Naive thymus-derived CD4-positive, alpha-beta T cell (primary cell): ENCODE measurements at regions of chr15 and their contacts with region 1.

Region 1: DNA sequence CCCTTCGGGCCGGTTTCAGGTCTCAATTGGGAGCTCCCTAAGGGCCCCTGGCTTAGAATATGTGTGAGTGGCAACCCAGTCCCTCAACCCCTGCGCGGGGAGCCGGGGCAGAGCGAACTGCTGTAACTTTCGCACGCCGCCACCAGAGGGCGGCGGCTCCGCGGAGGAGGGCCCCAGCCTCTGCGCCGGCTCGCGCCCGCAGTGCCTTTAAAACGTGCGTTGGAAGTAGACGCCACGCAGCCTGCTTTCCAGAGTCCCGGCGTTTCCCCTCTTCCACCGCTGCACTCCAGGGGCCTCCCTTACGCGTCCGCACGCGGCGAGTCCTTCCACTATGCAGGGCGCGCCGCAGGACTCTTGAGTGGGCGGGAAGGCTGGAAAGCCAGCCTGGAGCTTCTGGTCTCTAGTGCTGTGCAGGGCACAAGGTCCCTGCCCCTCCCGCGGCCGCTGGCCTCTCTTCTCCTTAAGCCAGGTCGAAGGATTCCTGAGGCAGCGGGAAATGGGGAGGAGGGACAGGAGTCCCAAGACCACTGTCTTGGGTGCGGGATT is 23.7 kb upstream of the RNU6-1 start:
- DNase-seq: peak; percentile 49 to 77 (median 65)
- ATAC-seq: peak; percentile 99
- H3K4me3 ChIP-seq: peak overlapping the region; percentile 25
- H3K4me3 Mint-ChIP-seq: peak overlapping the region in 8 of 10 donors; percentile 28 to 81 (median 52)
- H3K27ac ChIP-seq: no peak overlapping the region
- H3K27ac Mint-ChIP-seq: no peak overlapping the region
- H3K4me1 ChIP-seq: peaks cover 0 to 5% of the 10 kb centered on the region in 2 donors
- H3K4me1 Mint-ChIP-seq: peaks cover 0 to 4% (median 3%) of the 10 kb centered on the region in 7 donors
- H3K27me3 ChIP-seq: no peaks in the 10 kb centered on the region
- H3K27me3 Mint-ChIP-seq: peaks cover 8 to 48% (median 9%) of the 10 kb centered on the region in 5 donors

Region 2: GRCh38 chr15:68154923-68155559 is 291.5 kb after region 1 on chr15:
- CTCF ChIA-PET with region 1: interaction called, 11 read pairs
- POLR2A ChIA-PET with region 1: no interaction called
- intact Hi-C with region 1: loop called in 1 of 2 experiments (anchors 1 kb)
- DNase-seq: peak in 6 of 9 donors; percentile 4 to 47 (median 30)
- ATAC-seq: peak; percentile 36
- H3K4me3 ChIP-seq: no peak overlapping the region
- H3K4me3 Mint-ChIP-seq: no peak overlapping the region
- H3K27ac ChIP-seq: no peak overlapping the region
- H3K27ac Mint-ChIP-seq: peak overlapping the region in 2 of 9 donors; percentile 1 to 62
- H3K4me1 ChIP-seq: no peaks in the 10 kb centered on the region
- H3K4me1 Mint-ChIP-seq: peaks cover 0 to 14% (median 6%) of the 10 kb centered on the region in 7 donors
- H3K27me3 ChIP-seq: no peaks in the 10 kb centered on the region
- H3K27me3 Mint-ChIP-seq: no peaks in the 10 kb centered on the region

Region 3: DNA sequence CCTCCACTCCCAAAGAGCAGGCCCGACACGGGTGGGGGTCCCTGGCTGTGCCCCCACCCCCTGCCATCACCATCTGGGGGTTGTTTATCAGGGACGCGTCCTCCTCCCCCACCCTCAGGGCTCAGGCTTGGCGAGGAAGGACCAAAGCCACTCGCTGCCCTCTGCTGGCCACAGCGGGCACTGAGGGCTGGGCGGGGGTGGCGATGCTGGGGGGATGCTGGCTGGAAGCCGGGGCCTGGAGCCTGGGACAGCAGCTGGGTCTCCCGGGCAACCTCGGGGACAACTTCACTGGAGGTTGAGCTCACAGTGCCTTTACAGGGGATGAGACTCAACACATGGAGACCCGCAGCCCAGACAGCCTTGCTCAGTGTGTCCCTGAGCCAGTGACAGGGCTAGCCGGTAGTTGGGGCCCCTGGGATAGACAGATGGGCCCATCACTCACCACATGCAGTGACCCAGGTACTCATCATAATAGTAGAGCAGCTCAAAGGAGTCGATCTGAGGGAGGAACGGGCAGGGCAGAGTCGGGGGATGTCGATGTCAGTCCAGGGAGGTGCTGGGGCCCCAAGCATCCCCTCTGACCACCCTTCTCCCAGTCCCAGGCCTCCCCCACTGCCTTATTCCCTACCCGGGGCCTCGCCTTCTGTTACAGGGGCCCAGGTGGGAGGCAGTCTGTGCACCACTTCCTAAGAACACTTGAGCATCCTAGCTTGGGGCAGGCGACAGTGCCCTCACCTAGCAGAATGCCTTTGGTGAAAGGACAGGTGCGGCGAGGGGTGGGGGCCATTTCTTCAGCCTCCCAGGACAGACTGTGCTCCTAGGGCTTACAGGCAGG is 347.5 kb after region 1 on chr15:
- CTCF ChIA-PET with region 1: interaction called, 3 read pairs
- POLR2A ChIA-PET with region 1: no interaction called
- intact Hi-C with region 1: loop called (anchors 1 kb)
- DNase-seq: peak in 8 of 9 donors; percentile 27 to 67 (median 40)
- ATAC-seq: peak; percentile 62
- H3K4me3 ChIP-seq: no peak overlapping the region
- H3K4me3 Mint-ChIP-seq: no peak overlapping the region
- H3K27ac ChIP-seq: no peak overlapping the region
- H3K27ac Mint-ChIP-seq: peak overlapping the region in 1 of 9 donors; percentile 71
- H3K4me1 ChIP-seq: peaks cover 0 to 18% of the 10 kb centered on the region in 2 donors
- H3K4me1 Mint-ChIP-seq: peaks cover 12 to 34% (median 28%) of the 10 kb centered on the region in 7 donors
- H3K27me3 ChIP-seq: no peaks in the 10 kb centered on the region
- H3K27me3 Mint-ChIP-seq: no peaks in the 10 kb centered on the region

Region 4: GRCh38 chr15:68229386-68230156 is 366.1 kb after region 1 on chr15 and contains the start of gene CLN6:
- CTCF ChIA-PET with region 1: interaction called, 4 read pairs
- POLR2A ChIA-PET with region 1: no interaction called
- intact Hi-C with region 1: loop called in 1 of 2 experiments (anchors 1 kb)
- DNase-seq: peak; percentile 68 to 88 (median 81)
- ATAC-seq: peak; percentile 94
- H3K4me3 ChIP-seq: peak within 1 kb of the TSS; percentile 93
- H3K4me3 Mint-ChIP-seq: peak within 1 kb of the TSS; percentile 86 to 98 (median 92)
- H3K27ac ChIP-seq: peak within 1 kb of the TSS; percentile 79
- H3K27ac Mint-ChIP-seq: peak within 1 kb of the TSS; percentile 69 to 97 (median 88)
- H3K4me1 ChIP-seq: peaks cover 0 to 17% of the 10 kb centered on the region in 2 donors
- H3K4me1 Mint-ChIP-seq: peaks cover 30 to 44% (median 38%) of the 10 kb centered on the region in 7 donors
- H3K27me3 ChIP-seq: no peaks in the 10 kb centered on the region
- H3K27me3 Mint-ChIP-seq: peaks cover 0 to 3% (median 0%) of the 10 kb centered on the region in 5 donors
- total RNA-seq, gene CLN6: 15.0 to 66.6 (median 19.0) TPM

Region 5: DNA sequence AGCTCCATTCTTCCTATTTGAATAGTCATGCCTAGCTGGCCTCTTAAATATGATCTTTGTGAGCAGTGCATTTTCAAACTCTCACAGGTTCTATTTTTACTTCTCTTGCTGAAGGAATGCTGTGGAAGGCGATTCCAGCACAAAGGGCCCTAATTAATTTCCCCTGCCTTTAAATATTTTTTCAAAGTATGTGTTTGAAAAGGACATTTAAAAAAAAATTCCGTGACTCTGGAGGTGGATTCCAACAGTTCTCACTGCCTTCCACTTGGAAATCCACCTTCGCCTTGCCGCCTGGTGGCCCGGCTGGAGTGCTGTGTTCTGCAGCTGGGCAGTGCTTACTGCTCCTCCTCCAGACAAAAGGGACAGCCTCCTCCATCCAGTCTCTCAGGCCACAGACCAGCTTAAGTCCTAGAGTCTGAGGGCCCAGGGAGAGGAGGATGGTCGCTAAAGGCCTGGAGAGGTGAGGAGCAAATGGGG is 653.8 kb after region 1 on chr15:
- CTCF ChIA-PET with region 1: no interaction called
- POLR2A ChIA-PET with region 1: no interaction called
- intact Hi-C with region 1: no loop called
- DNase-seq: no peak
- ATAC-seq: no peak
- H3K4me3 ChIP-seq: no peak overlapping the region
- H3K4me3 Mint-ChIP-seq: no peak overlapping the region
- H3K27ac ChIP-seq: no peak overlapping the region
- H3K27ac Mint-ChIP-seq: no peak overlapping the region
- H3K4me1 ChIP-seq: no peaks in the 10 kb centered on the region
- H3K4me1 Mint-ChIP-seq: peaks cover 0 to 2% (median 0%) of the 10 kb centered on the region in 7 donors
- H3K27me3 ChIP-seq: no peaks in the 10 kb centered on the region
- H3K27me3 Mint-ChIP-seq: peaks cover 12 to 64% (median 27%) of the 10 kb centered on the region in 5 donors

Region 6: DNA sequence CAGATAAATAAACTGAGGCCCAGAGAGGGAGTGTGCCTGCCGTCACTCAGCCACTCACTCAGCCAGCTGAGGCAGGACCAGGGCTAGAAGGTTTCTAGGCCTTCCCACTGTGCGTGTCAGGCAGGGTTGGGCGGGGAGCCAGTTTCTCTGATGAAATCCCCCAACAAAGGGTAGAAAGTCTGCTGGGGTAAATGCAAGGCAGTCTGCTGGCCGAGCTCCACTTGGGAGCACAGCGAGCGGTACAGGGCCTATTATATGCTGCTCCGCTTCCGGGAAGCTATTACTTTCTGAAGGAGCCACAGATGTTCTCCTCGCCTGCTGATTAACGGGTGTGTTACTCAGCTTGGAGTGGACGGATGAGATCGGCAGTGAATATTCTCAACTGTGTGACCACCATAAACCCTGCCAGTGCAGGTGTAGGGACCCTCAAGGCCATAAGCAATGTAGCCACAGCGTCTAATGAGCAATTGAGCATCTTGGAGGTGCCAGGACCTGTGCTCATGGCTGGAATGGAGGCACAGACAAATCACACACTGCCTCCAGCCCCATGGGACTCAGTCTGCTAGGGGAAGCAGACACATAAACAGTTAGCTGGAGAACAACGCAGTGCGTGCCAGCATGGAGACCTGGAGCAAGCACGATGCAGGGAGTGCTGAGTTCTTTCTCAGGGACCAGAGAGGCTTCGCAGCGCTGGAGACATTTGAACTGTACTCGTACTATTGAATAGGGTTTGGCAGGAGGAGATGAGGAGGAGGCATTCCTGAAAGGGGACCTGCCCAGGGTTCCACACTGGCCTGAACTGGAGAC is 757.4 kb after region 1 on chr15:
- CTCF ChIA-PET with region 1: no interaction called
- POLR2A ChIA-PET with region 1: no interaction called
- intact Hi-C with region 1: no loop called
- DNase-seq: no peak
- ATAC-seq: no peak
- H3K4me3 ChIP-seq: no peak overlapping the region
- H3K4me3 Mint-ChIP-seq: no peak overlapping the region
- H3K27ac ChIP-seq: no peak overlapping the region
- H3K27ac Mint-ChIP-seq: no peak overlapping the region
- H3K4me1 ChIP-seq: no peaks in the 10 kb centered on the region
- H3K4me1 Mint-ChIP-seq: peaks cover 0 to 3% (median 0%) of the 10 kb centered on the region in 7 donors
- H3K27me3 ChIP-seq: no peaks in the 10 kb centered on the region
- H3K27me3 Mint-ChIP-seq: peaks cover 0 to 8% (median 6%) of the 10 kb centered on the region in 5 donors